ENCODE measurements at regions of chr6 and their contacts with region 1.

Region 1: DNA sequence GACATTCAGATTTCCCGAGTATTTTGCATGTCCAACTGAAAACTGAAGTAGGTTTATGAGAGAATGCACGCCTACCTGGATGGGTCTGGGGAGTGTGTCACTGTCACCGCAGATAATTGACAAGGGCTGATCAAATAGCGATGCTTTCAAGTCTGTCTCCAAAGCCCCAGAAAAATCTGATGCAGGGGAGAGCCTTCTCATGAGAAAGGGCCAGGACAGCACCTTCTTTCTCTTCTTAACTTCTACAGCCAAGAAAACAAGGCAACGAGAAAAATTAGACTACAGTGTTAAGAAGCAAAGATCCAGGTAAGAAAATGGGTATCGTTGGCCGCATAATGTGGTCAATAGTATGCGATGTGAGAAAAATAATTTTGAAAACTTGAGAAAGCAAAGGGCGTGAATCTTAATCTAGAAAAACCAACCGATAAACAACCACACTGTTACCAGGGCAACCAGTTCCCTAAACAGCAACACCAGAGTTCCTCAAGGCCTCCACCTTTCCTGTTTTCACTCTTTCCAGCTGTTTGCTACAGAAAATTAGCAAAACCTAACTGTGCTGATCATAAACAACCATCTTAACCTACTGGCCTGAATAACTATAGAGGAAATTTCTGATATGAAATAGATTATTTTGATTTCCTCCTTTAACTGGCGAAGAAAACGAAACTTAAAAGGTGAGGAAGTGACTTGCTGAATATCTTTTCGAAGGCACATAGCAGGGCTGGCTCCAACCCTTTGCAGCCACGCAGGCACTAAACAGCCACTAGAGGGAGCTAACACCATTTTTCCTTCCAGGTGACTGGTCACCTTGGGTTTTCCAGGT is 2.6 kb downstream of the TAGAP start:
- DNase-seq: peak; percentile 46 to 62
- H3K4me3 ChIP-seq: no peak overlapping the region
- H3K27ac ChIP-seq: peak overlapping the region; percentile 39 to 47
- H3K4me1 ChIP-seq: no peaks in the 10 kb centered on the region
- H3K27me3 ChIP-seq: no peaks in the 10 kb centered on the region
- CTCF ChIP-seq: peak; percentile 71 to 91 (median 84)
- POLR2A ChIP-seq: no peak

Region 2: GRCh38 chr6:158879180-158879579 is 163.0 kb before region 1 on chr6:
- intact Hi-C with region 1: no loop called
- DNase-seq: no peak
- H3K4me3 ChIP-seq: no peak overlapping the region
- H3K27ac ChIP-seq: no peak overlapping the region
- H3K4me1 ChIP-seq: no peaks in the 10 kb centered on the region
- H3K27me3 ChIP-seq: no peaks in the 10 kb centered on the region
- CTCF ChIP-seq: no peak
- POLR2A ChIP-seq: no peak

Region 3: DNA sequence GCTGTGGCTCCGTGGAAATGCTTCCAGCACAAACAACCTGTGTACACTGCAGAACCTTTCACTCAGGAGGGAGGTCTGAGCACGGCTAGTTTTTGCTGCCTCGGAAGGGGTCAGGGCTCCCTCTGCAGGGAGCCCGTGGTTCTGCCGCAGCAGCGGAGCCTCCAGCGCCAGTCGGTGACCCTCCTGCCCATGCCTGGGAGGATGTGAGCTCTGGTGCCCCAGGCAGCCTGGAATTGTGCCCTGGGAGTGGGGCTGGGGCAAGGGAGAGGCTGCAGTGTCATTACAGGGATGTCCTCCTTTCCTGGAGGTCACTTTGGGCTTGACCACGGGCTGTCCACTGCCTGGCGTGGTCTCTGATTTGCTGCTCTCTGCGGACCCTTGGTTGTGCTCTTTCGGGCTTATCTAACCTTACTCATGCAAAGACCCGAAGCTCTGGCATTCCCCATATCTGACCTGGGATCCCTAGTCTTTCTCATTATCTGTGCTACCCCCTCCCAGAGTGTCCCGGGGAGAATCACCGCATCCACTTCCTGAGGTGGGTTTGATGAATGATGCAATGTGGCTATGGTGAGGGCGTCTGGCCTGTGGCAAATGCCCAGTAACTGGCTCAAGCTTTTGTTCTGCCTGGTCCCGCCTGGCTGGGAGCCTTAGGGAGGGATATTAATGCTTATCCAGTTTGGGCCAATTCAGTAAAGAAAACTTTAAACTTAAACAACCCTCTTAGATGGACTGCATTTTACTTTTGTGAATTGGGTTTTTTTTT is 62.1 kb after region 1 on chr6:
- intact Hi-C with region 1: loop called (anchors 10 kb)
- DNase-seq: peak; percentile 54 to 59
- H3K4me3 ChIP-seq: no peak overlapping the region
- H3K27ac ChIP-seq: no peak overlapping the region
- H3K4me1 ChIP-seq: no peaks in the 10 kb centered on the region
- H3K27me3 ChIP-seq: no peaks in the 10 kb centered on the region
- CTCF ChIP-seq: peak; percentile 84 to 92 (median 88)
- POLR2A ChIP-seq: no peak

Measured in uterus (tissue), 4 donors.